Activated CD8-positive, alpha-beta memory T cell treated with anti-CD3 and anti-CD28 coated beads, Interleukin-2, amount 10 ng/mL, durations not matched to agents 7 days and 5 days (primary cell): ENCODE measurements at regions of chr5 and their contacts with region 1.

Region 1: GRCh38 chr5:134041570-134042411 is 37.0 kb upstream of the VDAC1 start:
- DNase-seq: no peak
- ATAC-seq: no peak
- H3K4me3 Mint-ChIP-seq: no peak overlapping the region
- H3K27ac Mint-ChIP-seq: no peak overlapping the region
- H3K4me1 Mint-ChIP-seq: peaks cover 8% of the 10 kb centered on the region
- H3K27me3 Mint-ChIP-seq: peaks cover 35% of the 10 kb centered on the region

Region 2: GRCh38 chr5:134026521-134027268 is 15.1 kb before region 1 on chr5:
- CTCF ChIA-PET with region 1: interaction called, 25 read pairs
- DNase-seq: no peak
- ATAC-seq: peak; percentile 74
- H3K4me3 Mint-ChIP-seq: no peak overlapping the region
- H3K27ac Mint-ChIP-seq: no peak overlapping the region
- H3K4me1 Mint-ChIP-seq: no peaks in the 10 kb centered on the region
- H3K27me3 Mint-ChIP-seq: peaks cover 17% of the 10 kb centered on the region

Region 3: GRCh38 chr5:134063188-134063820 is 21.5 kb after region 1 on chr5:
- CTCF ChIA-PET with region 1: interaction called, 16 read pairs
- DNase-seq: no peak
- ATAC-seq: no peak
- H3K4me3 Mint-ChIP-seq: no peak overlapping the region
- H3K27ac Mint-ChIP-seq: no peak overlapping the region
- H3K4me1 Mint-ChIP-seq: no peaks in the 10 kb centered on the region
- H3K27me3 Mint-ChIP-seq: peaks cover 27% of the 10 kb centered on the region

Region 4: DNA sequence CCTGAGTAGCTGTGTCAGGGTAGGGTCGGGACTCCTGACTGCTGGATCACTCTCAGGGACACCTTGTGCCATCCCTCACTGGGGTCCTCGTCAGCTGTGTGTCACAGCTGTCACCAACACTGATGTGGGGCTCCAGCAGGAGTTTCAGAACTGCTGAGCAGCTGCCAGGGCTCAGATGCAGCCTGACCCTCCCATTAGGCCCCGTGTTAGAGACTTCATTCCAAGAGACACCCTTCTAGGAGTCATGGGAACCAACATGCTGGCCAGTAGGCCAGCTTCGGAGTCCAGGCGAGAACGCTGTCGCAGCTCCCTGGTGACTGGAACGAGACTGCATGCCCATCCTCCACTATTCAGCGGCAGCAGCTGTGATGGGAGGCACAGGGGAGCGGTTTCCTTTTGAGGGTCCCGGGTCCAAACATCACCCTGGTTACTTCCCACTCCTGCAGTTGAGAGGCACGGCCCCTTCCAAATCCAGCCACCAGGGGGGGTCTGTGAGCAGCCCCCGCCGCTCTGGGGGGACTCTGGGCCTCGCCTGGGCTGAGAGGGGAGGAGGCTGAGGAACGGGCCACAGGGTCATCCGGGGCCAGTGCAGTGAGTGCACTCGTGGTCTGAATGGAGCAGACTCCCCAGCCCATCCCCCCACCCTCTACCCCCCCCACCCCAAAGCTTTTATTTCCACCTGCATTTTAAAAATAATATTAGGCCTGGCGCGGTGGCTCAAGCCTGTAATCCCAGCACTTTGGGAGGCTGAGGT is 60.1 kb after region 1 on chr5:
- CTCF ChIA-PET with region 1: interaction called, 60 read pairs
- DNase-seq: peak; percentile 73
- ATAC-seq: peak; percentile 69
- H3K4me3 Mint-ChIP-seq: no peak overlapping the region
- H3K27ac Mint-ChIP-seq: no peak overlapping the region
- H3K4me1 Mint-ChIP-seq: peaks cover 36% of the 10 kb centered on the region
- H3K27me3 Mint-ChIP-seq: peaks cover 73% of the 10 kb centered on the region

Region 5: DNA sequence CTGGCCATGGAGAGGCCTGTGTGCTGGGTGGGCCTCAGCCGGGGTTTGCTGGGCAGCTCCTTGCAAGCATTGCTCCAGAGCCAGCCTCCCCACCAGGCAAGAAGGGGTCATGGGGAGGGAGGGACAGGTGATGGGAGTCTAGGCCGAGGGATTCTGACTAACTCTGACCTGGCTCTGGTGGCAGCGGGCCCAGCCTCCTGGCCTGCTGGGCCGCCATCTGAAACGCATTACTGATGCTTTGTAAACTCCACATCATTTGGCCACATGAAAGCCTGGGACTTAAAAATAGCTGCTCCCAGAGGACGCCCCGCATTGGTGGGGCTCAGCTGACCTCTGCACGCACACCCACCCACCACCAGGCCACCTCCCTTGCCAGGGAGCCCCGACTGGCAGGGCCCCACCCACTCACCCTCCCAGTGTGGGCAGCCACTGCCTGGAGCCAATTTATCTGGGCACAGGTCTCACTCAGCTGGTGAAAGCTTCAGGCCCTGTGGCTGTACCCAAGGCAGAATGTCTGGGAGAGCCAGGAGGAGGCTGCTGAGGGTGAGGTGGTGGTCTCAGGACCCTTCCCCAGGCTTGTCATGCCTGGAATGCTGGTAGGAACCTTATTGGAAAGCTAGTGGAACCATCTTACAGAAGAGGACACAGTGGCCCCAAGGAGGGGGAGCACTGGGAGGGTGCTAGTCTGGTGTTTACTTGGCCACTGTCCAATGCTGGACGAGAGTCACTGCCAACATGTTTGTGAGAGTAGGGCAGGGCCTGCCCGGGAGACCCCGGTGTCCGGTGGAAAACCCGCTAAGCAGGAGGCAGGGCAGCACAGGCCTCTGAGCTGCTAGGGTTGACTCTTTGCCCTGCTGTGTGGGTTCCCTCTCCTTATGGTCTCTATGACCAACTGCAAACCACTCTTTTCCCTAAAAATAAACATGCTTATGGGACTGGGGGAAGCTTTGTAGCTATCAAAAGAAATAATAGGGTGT is 83.5 kb after region 1 on chr5:
- CTCF ChIA-PET with region 1: interaction called, 10 read pairs
- DNase-seq: no peak
- ATAC-seq: no peak
- H3K4me3 Mint-ChIP-seq: no peak overlapping the region
- H3K27ac Mint-ChIP-seq: no peak overlapping the region
- H3K4me1 Mint-ChIP-seq: peaks cover 46% of the 10 kb centered on the region
- H3K27me3 Mint-ChIP-seq: peaks cover 72% of the 10 kb centered on the region